ENCODE measurements at regions of chr18 and their contacts with region 1.

Region 1: DNA sequence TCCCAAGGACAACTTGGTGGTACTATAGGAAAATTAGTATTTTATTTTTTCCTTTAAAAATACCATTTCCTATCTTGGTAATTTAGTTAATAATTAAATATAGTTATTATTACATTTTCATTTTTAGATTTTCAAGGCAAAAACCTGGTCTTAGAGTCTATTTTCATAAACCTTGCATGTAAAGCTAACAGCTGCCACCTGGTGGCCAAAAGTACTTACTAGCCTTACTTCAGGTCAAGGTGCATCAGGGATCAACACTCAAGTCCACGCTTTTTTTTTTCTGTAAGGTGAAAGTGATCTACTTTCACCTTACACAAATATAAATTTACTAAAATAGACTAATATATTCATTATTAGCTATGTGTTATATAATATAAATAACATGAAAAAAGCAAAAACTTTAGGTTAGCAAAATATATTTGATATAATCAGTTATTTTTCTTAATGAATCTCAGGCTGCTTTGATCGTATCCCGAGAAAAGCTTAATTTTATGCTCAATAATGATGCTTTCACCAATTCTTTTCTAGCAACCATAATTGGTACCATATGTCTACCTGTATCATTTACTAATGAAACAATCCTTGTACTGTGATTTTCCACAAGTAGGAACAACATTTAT is 62.5 kb downstream of the RELCH start:
- DNase-seq: peak; percentile 71
- H3K4me3 ChIP-seq: no peak overlapping the region
- H3K27ac ChIP-seq: no peak overlapping the region
- H3K4me1 ChIP-seq: no peaks in the 10 kb centered on the region
- H3K27me3 ChIP-seq: no peaks in the 10 kb centered on the region
- CTCF ChIP-seq: peak; percentile 36 to 85 (median 75)
- POLR2A ChIP-seq: no peak

Region 2: DNA sequence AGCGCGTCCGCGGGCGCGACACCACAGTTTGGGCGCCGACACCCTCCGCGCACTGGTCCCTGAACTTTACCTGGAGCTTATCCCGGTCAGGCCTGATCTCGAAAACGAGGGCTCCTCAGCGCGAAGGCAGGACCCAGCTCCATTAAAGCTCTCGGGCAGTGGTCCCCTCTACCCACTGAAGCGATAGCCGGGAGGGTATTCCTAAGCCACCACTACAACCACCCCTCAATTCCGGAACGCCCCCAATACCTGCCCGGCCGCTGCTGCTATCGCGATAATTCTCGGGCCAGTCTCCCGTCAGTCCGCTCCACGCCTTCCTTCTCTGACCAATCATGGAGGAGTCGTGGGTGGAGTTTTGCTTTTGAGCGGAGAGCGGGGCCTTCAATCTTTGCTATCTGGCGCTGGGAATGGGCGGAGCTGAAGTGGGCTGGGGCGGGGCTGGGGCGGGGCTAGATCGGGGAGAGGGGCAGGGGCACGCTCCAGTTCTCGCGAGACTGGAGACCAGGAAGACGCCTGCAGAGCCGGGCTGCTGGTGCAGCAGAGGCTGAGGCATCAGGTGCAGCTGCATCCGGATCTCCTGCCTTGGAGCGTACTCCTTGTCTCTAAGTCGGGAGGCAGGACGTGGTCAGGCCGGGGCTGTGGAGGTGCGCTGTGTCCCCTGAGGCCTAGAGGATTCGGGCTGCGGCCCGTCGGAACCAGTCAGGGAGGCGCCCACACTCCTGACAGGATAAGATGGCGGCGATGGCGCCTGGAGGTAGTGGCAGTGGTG is 62.6 kb before region 1 on chr18 and contains the starts of genes PIGN and RELCH:
- intact Hi-C with region 1: loop called (anchors 5 kb)
- DNase-seq: peak; percentile 97
- H3K4me3 ChIP-seq: peak within 1 kb of the TSS; percentile 91 to 100 (median 99)
- H3K27ac ChIP-seq: peak within 1 kb of the TSS; percentile 65 to 91 (median 88)
- H3K4me1 ChIP-seq: peaks cover 33 to 85% (median 57%) of the 10 kb centered on the region in 6 donors
- H3K27me3 ChIP-seq: no peaks in the 10 kb centered on the region
- CTCF ChIP-seq: peak in 3 of 11 experiments; percentile 25 to 37 (median 33)
- POLR2A ChIP-seq: peak in 2 of 3 donors; percentile 66 to 76
- total RNA-seq, gene PIGN: 21.5 to 41.4 (median 33.8) TPM
- total RNA-seq, gene RELCH: 38.3 to 75.1 (median 52.5) TPM

Region 3: DNA sequence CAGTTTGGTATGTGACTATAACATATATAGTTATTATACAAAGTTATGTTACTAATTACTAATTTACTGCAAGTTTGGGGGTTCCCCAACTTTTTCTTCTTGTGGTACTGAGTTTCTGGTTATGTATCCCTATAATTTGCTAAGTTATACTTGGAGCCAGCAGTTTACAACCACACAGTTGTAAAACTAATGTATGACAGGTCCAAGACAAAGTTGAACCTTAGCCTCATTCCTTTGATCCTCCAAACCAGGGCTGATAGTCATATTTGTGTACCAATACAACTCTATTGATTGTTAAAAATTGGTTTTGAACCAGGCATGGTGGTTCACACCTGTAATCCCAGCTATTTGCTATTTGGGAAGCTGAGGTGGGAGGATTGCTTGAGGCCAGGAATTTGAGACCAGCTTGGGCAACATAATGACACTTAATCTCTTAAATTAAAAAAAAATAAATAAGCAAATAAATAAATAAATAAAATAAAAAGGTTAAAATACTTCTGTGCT is 38.2 kb before region 1 on chr18:
- intact Hi-C with region 1: no loop called
- DNase-seq: no peak
- H3K4me3 ChIP-seq: no peak overlapping the region
- H3K27ac ChIP-seq: no peak overlapping the region
- H3K4me1 ChIP-seq: peaks cover 0 to 23% (median 3%) of the 10 kb centered on the region in 6 donors
- H3K27me3 ChIP-seq: no peaks in the 10 kb centered on the region
- CTCF ChIP-seq: no peak
- POLR2A ChIP-seq: no peak

Region 4: GRCh38 chr18:62425465-62426195 is 176.0 kb after region 1 on chr18:
- intact Hi-C with region 1: no loop called
- DNase-seq: no peak
- H3K4me3 ChIP-seq: peak overlapping the region in 2 of 8 donors; percentile 15 to 44
- H3K27ac ChIP-seq: peak overlapping the region; percentile 22 to 82 (median 77)
- H3K4me1 ChIP-seq: peaks cover 0 to 38% (median 20%) of the 10 kb centered on the region in 6 donors
- H3K27me3 ChIP-seq: no peaks in the 10 kb centered on the region
- CTCF ChIP-seq: peak; percentile 72 to 94 (median 86)
- POLR2A ChIP-seq: no peak

Measured in spleen (tissue), 13 donors.